AG04450 (cell line): ENCODE measurements at regions of chr19 and their contacts with region 1.

Region 1: DNA sequence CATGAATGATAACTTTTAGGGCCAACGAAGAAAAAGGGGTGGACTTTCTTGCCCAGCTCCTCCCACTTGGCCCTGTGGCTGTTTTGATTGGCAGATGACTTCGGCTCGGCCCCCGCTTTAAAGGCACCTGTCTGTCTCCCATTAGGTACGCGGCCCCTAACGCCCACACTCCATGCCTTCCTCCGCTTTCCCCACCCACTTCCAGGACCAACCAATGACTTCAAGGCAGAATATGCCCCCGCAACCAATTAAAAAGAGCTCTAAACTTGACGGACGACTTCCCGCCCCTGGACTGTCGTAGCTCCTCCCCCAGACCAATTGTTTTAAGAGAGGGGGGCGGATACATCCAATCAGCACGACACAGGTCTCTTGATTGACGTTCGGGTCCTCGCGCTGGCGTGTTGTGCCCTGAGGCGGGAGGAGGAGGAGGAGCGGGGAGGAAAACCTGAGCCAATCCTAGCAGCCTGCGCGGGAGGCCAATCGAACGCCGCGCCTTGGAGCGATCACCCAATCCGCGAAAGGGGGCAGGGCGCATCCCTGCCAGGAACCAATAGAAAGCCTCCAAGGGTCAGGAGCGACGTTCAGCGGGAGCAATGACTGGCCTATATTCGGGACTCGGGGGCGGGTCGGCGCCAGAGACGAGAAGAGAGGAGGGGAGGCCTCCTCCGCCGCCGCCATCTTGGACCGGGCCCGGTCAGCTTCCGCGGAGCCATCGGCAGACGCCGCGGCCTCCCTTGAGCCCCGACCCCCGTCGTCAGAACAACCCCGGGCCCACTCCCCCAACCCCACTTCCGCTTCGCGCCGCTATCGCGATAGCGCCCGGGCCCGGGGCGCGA is at the start of gene CNOT3:
- DNase-seq: peak; percentile 100
- H3K4me3 ChIP-seq: peak within 1 kb of the TSS; percentile 77
- H3K27ac ChIP-seq: peak within 1 kb of the TSS; percentile 65
- H3K27me3 ChIP-seq: peaks cover 3% of the 10 kb centered on the region
- CTCF ChIP-seq: no peak
- polyA plus RNA-seq, gene CNOT3: 9.9 and 18.7 TPM in 2 replicates

Region 2: DNA sequence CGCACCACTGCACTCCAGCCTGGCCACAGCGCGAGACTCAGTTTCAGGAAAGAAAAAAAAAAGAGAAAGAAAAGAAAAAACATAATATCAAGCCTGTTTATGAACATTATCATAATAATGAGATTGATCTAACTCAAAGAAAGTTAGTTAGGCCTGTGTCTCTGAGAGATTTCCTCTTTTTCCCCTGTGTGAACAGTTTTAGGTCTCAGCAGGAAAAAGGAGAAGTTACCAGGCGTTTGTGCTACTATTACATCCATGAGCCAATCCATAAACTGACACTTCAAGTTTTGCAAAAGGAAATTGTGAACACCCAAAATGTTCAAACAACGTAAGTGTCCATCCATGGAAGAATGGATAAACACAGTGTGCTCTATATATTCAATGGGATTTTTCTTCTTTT is 60.0 kb before region 1 on chr19:
- CTCF ChIA-PET with region 1: no interaction called
- POLR2A ChIA-PET with region 1: no interaction called
- DNase-seq: no peak
- H3K4me3 ChIP-seq: no peak overlapping the region
- H3K27ac ChIP-seq: no peak overlapping the region
- H3K27me3 ChIP-seq: no peaks in the 10 kb centered on the region
- CTCF ChIP-seq: no peak

Region 3: DNA sequence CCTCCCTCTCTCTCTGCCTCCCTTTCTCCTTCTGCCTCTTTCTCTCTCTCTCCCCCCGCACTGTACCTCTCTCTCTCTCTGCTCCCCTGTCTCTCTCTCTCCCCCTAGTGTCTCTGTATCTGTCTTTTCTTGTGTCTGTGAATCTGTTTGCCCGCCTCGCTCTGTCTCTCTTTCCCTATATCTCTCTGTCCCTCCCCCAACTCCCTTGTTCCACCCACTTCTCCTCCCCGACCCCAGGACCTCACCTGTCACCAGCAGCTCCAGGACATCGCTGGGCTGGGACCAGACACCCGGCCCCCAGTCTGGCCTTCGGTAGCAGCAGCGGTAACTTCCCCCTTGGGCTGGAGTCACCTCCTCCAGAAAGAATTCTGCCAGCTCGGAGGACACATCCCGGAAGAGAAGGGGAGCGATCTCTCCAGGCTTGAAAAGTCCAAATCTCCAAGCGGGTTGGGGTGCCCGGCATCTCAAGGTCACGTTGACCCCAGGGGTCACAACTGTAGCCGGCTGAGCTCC is 40.6 kb before region 1 on chr19:
- CTCF ChIA-PET with region 1: no interaction called
- POLR2A ChIA-PET with region 1: interaction called, 18 read pairs
- DNase-seq: no peak
- H3K4me3 ChIP-seq: peak overlapping the region; percentile 49
- H3K27ac ChIP-seq: no peak overlapping the region
- H3K27me3 ChIP-seq: no peaks in the 10 kb centered on the region
- CTCF ChIP-seq: peak; percentile 55

Region 4: DNA sequence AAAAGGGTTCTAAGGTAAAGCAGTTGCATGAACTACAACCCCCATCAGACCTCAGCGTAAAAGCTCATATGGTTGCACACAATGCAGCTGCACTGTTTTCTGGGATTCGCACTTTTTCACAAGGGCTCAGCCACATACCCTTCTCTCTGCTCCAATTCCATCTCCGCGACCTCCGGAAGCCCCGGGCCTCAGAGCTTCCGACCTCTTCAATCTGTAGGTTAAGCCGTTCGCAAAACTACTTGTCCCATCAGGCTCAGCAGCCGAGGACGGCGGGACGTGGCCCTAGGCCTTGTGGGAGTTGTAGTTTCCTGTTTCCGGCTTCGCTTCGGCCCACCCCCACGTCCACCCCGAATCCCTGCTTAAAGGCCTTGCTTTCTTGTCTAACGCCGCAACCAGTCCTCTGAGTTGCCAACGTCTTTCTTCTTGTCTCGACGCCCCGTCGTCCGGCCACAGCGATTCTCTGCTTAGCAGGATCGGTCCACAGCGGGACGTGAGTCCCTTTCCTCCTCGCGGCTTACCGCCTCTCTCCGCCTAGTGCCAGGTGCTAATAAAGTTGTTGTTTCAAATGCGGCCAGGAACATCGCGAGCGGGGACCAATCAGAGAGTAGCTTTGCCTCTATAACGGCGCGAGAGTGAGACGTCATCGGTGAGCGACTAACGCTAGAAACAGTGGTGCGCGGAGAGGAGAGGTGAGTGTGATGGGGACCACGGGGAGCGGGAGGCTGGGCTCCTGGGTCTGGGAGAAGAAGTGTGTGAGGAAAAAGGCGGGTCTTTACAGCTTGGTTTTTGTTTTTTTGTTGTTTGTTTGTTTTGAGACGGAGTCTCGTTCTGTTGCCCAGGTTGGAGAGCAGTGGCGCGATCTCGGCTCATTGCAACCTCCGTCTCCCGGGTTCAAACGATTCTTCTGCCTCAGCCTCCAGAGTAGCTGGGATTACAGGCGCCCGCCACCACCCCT is 21.9 kb before region 1 on chr19 and contains the starts of genes PRPF31 and TFPT:
- CTCF ChIA-PET with region 1: no interaction called
- POLR2A ChIA-PET with region 1: interaction called, 16 read pairs
- DNase-seq: peak; percentile 93
- H3K4me3 ChIP-seq: peak within 1 kb of the TSS; percentile 73
- H3K27ac ChIP-seq: peak within 1 kb of the TSS; percentile 75
- H3K27me3 ChIP-seq: no peaks in the 10 kb centered on the region
- CTCF ChIP-seq: no peak
- polyA plus RNA-seq, gene PRPF31: 28.7 and 35.3 TPM in 2 replicates
- polyA plus RNA-seq, gene TFPT: 12.3 and 15.8 TPM in 2 replicates

Region 5: GRCh38 chr19:54159352-54160181 is 22.3 kb after region 1 on chr19 and contains the start of gene LENG1:
- CTCF ChIA-PET with region 1: interaction called, 6 read pairs
- POLR2A ChIA-PET with region 1: interaction called, 16 read pairs
- DNase-seq: peak; percentile 100
- H3K4me3 ChIP-seq: peak within 1 kb of the TSS; percentile 97
- H3K27ac ChIP-seq: peak within 1 kb of the TSS; percentile 97
- H3K27me3 ChIP-seq: no peaks in the 10 kb centered on the region
- CTCF ChIP-seq: peak; percentile 31
- polyA plus RNA-seq, gene LENG1: 3.0 and 3.3 TPM in 2 replicates

Region 6: DNA sequence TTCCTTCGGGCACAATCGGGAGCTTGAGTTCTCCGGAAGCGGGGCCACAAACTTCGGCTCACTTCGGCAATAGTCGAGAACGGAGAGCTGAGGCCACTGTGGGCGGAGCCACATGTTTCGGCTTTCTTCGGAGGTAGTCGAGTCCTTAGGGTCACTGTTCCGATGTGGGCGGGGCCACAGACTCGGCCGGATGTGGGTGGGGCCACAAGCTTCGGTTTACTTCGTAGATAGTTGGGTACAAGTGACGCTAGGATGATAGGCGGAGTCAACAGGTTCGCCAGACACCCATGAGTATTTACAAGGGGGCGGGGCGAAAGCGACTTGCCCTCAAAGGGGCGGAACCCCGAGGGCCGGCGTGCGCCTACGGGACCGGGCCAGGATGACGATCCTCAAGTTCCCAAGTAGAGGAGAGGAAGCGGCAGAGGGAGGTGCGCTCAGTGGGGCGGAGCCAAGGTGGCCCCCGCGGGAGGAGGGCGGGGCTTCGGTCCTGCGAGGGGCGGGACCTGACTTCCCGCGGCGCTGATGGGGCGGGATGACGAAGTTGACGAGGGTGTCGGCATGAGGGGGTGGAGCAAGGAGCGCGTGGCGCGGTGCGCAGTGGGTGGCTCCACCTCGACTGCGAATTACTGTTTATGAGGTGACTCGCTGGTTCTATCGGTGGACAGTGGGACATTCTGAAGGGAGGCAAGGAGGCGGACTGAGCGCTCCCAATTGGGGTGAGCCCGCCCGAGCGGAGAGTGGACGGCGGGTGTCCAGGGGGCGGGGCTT is 52.6 kb after region 1 on chr19:
- CTCF ChIA-PET with region 1: no interaction called
- POLR2A ChIA-PET with region 1: interaction called, 23 read pairs
- DNase-seq: peak; percentile 100
- H3K4me3 ChIP-seq: peak overlapping the region; percentile 82
- H3K27ac ChIP-seq: peak overlapping the region; percentile 99
- H3K27me3 ChIP-seq: no peaks in the 10 kb centered on the region
- CTCF ChIP-seq: no peak

Region 7: DNA sequence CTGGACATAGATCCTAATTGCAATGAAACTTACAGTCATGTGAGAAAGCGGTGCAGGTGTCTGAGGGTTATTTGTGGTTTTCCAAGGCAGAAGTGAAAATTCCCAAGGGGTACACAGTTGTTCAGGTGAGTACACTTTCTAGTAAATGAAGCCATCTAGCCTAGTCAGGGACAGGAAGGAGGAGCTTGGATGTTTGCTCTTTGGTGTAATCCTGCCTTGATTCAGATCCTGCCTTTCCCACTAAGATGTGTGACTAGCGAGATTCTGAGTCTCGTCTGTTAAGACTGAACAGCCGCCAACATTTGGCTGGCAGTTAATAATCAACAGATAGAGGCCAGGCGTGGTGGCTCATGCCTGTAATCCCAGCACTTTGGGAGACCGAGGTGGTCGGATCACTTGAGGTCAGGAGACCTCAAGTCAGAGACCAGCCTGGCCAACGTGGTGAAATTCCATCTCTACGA is 65.9 kb after region 1 on chr19:
- CTCF ChIA-PET with region 1: no interaction called
- POLR2A ChIA-PET with region 1: interaction called, 20 read pairs
- DNase-seq: no peak
- H3K4me3 ChIP-seq: peak overlapping the region; percentile 94
- H3K27ac ChIP-seq: no peak overlapping the region
- H3K27me3 ChIP-seq: no peaks in the 10 kb centered on the region
- CTCF ChIP-seq: no peak